BJ (cell line): ENCODE measurements at regions of chr19 and their contacts with region 1.

Region 1: GRCh38 chr19:38769635-38770211 is 3.6 kb downstream of the LGALS7 start:
- DNase-seq: no peak
- H3K4me3 ChIP-seq: no peak overlapping the region
- H3K27me3 ChIP-seq: no peaks in the 10 kb centered on the region
- CTCF ChIP-seq: peak; percentile 80

Region 2: DNA sequence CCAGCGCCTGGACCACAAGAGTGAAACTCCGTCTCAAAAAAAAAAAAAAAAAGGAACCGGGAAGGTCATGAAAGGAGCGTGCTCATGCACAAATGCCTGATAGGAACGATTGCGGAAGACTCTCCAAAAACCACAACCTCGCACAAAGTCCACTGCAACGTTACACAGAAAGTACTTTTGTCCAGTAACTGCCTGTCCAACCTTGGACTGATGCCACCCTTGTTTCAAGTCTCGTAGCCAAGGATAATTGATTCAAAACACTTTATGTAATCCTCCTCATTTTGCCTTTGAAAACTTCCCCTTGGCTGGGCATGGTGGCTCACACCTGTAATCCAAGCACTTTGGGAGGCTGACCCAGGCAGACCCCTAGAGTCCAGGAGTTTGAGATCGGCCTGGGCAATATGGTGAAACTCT is 10.1 kb before region 1 on chr19:
- CTCF ChIA-PET with region 1: interaction called, 10 read pairs
- POLR2A ChIA-PET with region 1: no interaction called
- DNase-seq: no peak
- H3K4me3 ChIP-seq: no peak overlapping the region
- H3K27me3 ChIP-seq: no peaks in the 10 kb centered on the region
- CTCF ChIP-seq: no peak

Region 3: DNA sequence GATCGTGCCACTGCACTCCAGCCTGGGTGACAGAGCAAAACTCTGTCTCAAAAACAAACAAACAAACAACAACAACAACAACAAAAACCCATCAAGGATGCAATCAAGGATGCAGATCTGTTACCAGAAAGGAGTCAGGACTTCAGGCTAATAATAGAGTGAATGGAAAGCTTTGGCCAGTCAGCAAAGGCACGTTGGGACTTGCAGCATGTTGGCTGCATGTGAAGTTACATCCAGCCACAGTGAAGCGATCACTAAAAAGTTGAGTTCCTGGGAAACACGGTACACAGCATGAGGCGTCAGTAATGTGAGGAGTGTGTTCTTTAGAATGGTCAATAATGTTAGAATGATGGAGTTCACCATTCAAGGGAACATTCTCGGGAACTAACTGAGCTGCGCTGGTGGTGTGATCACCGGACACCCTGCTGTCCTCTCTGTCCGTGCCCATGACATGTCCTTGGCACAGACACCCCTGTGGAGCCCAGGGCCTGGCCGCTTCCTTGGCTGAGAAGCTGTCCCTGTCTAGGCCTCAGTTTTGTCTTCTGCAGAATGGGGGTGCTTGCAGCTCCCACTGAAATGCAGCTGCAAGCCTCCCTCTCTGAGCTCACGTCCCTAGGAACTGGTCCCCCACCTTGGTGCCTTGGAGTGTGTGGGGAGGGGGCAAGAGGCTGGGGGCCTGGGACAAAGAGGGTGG is 17.0 kb after region 1 on chr19:
- CTCF ChIA-PET with region 1: interaction called, 12 read pairs
- POLR2A ChIA-PET with region 1: no interaction called
- DNase-seq: no peak
- H3K4me3 ChIP-seq: no peak overlapping the region
- H3K27me3 ChIP-seq: no peaks in the 10 kb centered on the region; the same call in 1 of the 2 replicates
- CTCF ChIP-seq: no peak